Activated CD4-positive, alpha-beta memory T cell treated with anti-CD3 and anti-CD28 coated beads for 36 hours (primary cell): ENCODE measurements at regions of chr19 and their contacts with region 1.

Region 1: DNA sequence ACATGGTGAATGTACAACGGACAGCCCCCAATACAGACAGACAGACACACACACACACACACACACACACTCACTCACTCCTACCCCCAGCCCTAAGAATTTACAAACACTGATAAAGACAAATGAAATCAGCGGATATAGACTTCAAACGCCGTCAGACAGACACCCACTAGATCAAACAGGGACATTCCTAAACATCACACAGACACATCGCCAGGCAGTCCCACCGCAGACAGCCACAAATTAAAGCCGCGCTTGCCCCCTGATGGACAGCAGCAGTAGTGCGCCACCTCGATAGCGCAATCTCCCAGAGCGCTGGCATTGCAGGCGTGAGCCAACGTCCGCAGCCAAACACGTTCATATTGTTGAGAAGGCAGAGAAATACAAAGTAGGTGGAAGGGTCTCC is 24.7 kb upstream of the ADGRE1 start:
- DNase-seq: peak; percentile 96
- H3K4me3 Mint-ChIP-seq: peak overlapping the region; percentile 74
- H3K27ac Mint-ChIP-seq: peak overlapping the region; percentile 30
- H3K4me1 Mint-ChIP-seq: peaks cover 17% of the 10 kb centered on the region
- H3K27me3 Mint-ChIP-seq: no peaks in the 10 kb centered on the region

Region 2: DNA sequence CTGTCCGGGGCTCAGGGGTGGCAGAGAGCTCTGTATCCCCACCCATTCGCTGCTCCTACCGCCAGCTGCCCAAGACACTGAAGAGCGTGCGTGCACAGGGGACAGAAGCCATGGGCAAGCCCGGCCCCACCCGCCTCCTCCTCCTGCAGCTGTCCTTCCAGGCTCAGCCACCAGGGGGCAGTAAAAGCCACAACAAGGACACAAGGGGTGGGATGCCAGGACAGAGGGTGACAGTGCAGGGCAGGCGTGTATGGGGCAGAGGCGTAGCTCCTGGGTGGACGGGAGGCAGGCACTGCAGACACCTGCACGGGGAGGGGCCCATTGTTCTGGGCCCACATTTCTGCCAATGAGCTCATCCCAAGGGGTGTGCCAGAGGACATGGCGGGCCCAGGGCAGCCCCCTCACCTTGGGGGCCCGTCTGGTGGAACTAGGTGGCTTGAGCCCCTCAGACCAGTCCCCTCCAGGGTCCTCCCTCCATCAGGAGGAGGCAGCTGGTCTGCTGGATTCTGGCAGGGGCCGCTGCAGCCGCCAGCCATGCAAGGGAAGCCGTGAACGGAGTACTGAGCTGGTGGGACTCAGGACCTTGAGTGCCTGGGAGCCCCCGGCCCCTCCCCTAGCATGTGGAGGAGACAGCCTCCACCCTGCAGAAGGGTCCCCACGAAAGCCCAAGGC is 644.0 kb before region 1 on chr19:
- CTCF ChIA-PET with region 1: interaction called, 10 read pairs
- POLR2A ChIA-PET with region 1: no interaction called
- intact Hi-C with region 1: no loop called
- DNase-seq: peak; percentile 89
- H3K4me3 Mint-ChIP-seq: no peak overlapping the region
- H3K27ac Mint-ChIP-seq: no peak overlapping the region
- H3K4me1 Mint-ChIP-seq: no peaks in the 10 kb centered on the region
- H3K27me3 Mint-ChIP-seq: no peaks in the 10 kb centered on the region

Region 3: DNA sequence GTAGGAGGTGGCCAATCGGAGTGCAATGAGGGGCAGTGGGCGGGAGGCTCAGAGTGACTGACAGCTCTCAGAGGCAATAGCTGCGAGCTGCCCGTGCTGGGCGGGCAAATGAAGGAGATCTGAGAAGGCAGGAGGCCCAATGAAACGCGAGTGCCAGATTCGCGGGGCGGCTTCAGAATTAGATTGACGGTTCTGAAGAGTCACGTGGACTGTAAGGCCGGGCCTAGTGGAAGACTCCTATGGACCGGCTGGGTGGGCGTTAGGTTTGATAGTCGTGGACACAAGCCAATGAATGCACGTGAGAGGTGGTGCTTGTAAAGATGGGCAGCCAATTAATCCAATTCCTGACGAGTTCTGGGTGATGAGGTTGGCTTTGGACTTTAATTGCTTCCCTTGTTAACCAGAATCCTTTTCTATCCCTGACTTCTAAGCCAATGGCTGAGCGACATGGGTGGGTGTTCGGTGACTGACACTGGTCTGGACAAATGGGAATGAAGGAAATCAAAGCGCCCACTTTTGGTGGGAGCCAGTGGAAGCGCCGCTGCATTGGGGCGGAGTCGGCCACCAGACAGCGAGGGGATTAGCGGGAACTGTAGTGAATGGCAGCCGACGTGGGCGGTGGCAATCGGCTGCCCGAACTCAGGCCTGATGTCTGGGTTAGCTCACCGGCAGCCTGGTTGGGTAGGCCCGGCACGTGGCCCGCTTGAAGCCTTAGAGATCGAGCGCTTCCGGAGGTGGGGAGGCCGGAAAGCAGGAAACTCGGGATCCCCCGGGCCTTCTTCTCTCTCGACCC is 437.5 kb before region 1 on chr19:
- CTCF ChIA-PET with region 1: interaction called, 3 read pairs
- POLR2A ChIA-PET with region 1: interaction called, 3 read pairs
- intact Hi-C with region 1: loop called (anchors 1 kb)
- DNase-seq: peak; percentile 100
- H3K4me3 Mint-ChIP-seq: peak overlapping the region; percentile 75
- H3K27ac Mint-ChIP-seq: peak overlapping the region; percentile 92
- H3K4me1 Mint-ChIP-seq: peaks cover 36% of the 10 kb centered on the region
- H3K27me3 Mint-ChIP-seq: no peaks in the 10 kb centered on the region

Region 4: DNA sequence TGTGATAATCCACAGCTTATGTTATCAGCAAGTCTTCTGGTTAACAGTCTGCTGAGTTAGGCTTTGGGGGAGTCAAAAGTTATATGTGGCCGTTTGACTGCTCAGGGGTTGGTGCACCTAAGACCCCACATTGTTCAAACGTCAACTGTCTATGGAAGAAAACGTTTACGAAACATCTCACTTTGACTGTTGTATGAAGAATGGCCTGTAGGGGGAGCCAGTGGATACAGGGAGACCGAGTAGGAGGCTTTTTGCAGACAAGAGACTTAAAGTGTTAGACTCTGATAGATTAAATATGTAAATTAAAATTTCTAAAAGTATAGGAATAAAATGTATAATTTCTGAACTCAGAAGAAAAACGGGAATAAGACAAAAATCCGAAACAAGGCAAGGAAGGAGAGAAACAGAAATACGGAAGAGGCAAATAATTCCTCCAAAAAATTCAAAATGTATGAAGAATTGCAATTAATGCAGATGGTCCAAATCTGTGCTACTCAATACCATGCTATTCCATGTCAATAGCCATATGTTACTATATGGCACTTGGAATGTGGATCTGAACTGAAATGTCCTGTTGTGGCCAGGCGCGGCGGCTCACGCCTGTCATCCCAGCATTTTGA is 230.6 kb before region 1 on chr19:
- CTCF ChIA-PET with region 1: interaction called, 12 read pairs
- POLR2A ChIA-PET with region 1: no interaction called
- intact Hi-C with region 1: loop called (anchors 1 kb)
- DNase-seq: peak; percentile 80
- H3K4me3 Mint-ChIP-seq: no peak overlapping the region
- H3K27ac Mint-ChIP-seq: no peak overlapping the region
- H3K4me1 Mint-ChIP-seq: peaks cover 26% of the 10 kb centered on the region
- H3K27me3 Mint-ChIP-seq: peaks cover 4% of the 10 kb centered on the region

Region 5: GRCh38 chr19:6737284-6738046 is 125.2 kb before region 1 on chr19 and contains the start of gene GPR108:
- CTCF ChIA-PET with region 1: interaction called, 106 read pairs
- POLR2A ChIA-PET with region 1: interaction called, 27 read pairs
- intact Hi-C with region 1: loop called (anchors 1 kb)
- DNase-seq: peak; percentile 100
- H3K4me3 Mint-ChIP-seq: peak within 1 kb of the TSS; percentile 98
- H3K27ac Mint-ChIP-seq: peak within 1 kb of the TSS; percentile 98
- H3K4me1 Mint-ChIP-seq: peaks cover 34% of the 10 kb centered on the region
- H3K27me3 Mint-ChIP-seq: no peaks in the 10 kb centered on the region
- total RNA-seq, gene GPR108: 72.1 to 75.4 TPM

Region 6: GRCh38 chr19:6767357-6768235 is 95.1 kb before region 1 on chr19 and contains the start of gene SH2D3A:
- CTCF ChIA-PET with region 1: interaction called, 38 read pairs
- POLR2A ChIA-PET with region 1: interaction called, 5 read pairs
- intact Hi-C with region 1: loop called (anchors 1 kb)
- DNase-seq: peak; percentile 97
- H3K4me3 Mint-ChIP-seq: peak within 1 kb of the TSS; percentile 85
- H3K27ac Mint-ChIP-seq: peak within 1 kb of the TSS; percentile 92
- H3K4me1 Mint-ChIP-seq: peaks cover 39% of the 10 kb centered on the region
- H3K27me3 Mint-ChIP-seq: no peaks in the 10 kb centered on the region
- total RNA-seq, gene SH2D3A: 17.1 to 18.2 TPM

Region 7: GRCh38 chr19:6811906-6812305 is 50.8 kb before region 1 on chr19:
- CTCF ChIA-PET with region 1: interaction called, 4 read pairs
- POLR2A ChIA-PET with region 1: interaction called, 3 read pairs
- intact Hi-C with region 1: loop called (anchors 2 kb)
- DNase-seq: no peak
- H3K4me3 Mint-ChIP-seq: no peak overlapping the region
- H3K27ac Mint-ChIP-seq: peak overlapping the region; percentile 68
- H3K4me1 Mint-ChIP-seq: peaks cover 68% of the 10 kb centered on the region
- H3K27me3 Mint-ChIP-seq: no peaks in the 10 kb centered on the region

Region 8: DNA sequence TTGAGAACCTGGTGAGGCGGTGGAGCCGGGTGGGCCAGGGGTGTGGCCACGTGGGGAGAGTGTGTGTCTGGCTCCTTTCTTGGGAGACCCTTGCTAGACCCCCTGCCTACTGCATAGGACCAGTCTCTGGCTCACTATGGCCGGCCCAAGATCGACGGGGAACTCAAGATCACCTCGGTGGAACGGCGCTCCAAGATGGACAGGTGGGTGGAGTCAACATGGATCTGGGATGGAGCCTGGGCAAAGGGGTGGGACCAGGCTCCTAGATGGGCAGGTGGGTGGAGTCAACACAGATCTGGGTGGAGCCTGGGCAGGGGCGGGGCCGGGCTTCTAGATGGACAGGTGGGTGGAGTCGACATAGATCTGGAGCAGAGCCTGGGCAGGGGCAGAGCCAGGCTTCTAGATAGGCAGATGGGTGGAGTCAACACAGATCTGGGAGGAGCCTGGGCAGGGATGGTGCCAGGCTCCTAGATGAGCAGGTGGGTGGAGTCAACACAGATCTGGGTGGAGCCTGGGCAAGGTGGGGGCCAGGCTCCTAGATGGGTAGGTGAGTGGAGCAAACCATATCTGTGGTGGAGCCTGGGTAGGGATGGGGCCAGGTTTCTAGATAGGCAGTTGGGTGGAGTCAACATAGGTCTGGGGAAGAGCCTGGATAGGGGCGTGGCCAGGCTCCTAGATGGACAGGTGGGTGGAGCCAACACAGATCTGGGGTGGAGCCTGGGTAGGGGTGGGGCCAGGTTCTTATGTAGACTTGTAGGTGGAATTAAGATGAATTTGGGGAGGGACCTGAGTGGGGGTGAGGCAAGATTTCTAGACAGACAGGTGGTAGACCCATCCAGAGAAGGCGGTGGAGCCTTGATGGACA is 33.7 kb before region 1 on chr19:
- CTCF ChIA-PET with region 1: no interaction called
- POLR2A ChIA-PET with region 1: no interaction called
- intact Hi-C with region 1: no loop called
- DNase-seq: peak; percentile 74
- H3K4me3 Mint-ChIP-seq: no peak overlapping the region
- H3K27ac Mint-ChIP-seq: peak overlapping the region; percentile 34
- H3K4me1 Mint-ChIP-seq: peaks cover 5% of the 10 kb centered on the region
- H3K27me3 Mint-ChIP-seq: no peaks in the 10 kb centered on the region

Region 9: DNA sequence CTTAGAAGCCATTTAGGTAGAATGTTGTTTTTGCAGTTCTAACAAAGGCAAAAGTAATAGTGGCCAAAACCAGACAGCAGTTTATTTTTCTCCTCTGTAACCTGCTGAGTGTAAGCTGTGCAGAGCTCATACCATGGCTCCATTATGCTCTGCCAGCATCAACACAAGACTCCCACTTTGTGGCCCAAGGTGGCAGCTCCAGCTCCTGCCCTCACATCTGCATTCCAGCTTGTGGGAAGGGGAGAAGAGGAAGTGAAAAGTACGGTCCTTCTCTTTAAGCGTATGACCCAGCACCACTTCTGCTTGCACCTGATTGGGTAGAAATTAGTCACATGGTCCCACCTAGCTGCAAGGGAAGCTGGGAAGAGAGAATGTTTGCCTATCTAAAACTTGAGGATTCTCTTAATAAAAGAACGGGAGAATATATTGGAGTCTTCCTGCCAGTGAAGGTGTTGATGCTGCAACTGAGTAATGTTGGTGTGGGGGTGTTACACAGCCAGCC is 43.9 kb after region 1 on chr19:
- CTCF ChIA-PET with region 1: no interaction called
- POLR2A ChIA-PET with region 1: no interaction called
- intact Hi-C with region 1: no loop called
- DNase-seq: no peak
- H3K4me3 Mint-ChIP-seq: no peak overlapping the region
- H3K27ac Mint-ChIP-seq: no peak overlapping the region
- H3K4me1 Mint-ChIP-seq: no peaks in the 10 kb centered on the region
- H3K27me3 Mint-ChIP-seq: no peaks in the 10 kb centered on the region